ENCODE measurements at regions of chr12 and their contacts with region 1.

Region 1: GRCh38 chr12:64403707-64404469 is at the start of gene XPOT:
- DNase-seq: peak; percentile 95

Region 2: DNA sequence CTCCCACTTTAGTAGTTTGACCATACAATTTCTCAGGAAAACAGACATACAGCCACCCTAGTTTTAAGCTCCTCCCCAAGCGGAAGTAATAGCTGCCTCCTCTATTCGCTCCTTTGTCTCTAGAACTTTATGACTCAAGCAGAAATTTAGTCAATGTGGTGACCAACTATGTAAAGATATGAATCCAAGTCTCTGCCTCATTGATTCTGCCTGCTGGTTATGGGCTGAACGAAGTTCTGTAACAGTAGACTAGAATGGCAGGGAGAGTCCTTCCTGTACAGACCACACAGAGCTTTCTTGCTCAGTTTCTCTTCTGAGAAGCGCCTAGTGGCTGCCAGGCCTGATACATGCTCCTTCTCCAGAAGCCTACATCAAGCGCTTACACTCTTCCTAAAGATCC is 200.9 kb before region 1 on chr12:
- CTCF ChIA-PET with region 1: no interaction called
- POLR2A ChIA-PET with region 1: no interaction called
- DNase-seq: no peak

Region 3: GRCh38 chr12:64362721-64363300 is 41.1 kb before region 1 on chr12:
- CTCF ChIA-PET with region 1: no interaction called
- POLR2A ChIA-PET with region 1: no interaction called
- DNase-seq: no peak

Region 4: DNA sequence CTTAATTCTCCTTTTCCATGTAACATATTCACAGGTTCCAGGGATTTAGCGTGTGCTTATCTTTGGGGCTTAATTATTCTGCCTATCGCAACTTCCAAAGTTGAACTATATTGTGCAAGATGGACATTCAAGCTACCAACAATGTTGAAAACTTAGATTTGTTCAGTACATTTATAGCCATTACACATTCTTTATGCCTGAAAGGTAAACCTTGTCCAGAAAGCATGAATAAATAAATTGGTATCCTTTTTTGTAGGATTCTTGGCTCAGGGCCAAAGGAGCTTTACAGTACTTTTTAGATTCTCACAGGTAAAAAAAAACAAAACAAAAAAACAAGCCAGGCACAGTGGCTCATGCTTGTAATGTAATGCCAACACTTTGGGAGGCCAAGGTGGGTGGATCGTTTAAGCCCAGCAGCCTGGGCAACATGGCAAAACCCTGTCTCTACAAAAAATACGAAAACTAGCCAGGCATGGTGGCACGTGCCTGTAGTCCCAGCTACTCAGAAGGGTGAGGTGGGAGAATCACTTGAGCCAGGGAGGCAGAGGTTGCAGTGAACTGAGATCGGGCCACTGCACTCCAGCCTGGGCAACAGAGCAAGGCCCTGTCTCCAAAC is 16.6 kb before region 1 on chr12:
- CTCF ChIA-PET with region 1: no interaction called
- POLR2A ChIA-PET with region 1: interaction called, 11 read pairs
- DNase-seq: no peak